Panc1 (cell line): ENCODE measurements at regions of chr22 and their contacts with region 1.

Region 1: DNA sequence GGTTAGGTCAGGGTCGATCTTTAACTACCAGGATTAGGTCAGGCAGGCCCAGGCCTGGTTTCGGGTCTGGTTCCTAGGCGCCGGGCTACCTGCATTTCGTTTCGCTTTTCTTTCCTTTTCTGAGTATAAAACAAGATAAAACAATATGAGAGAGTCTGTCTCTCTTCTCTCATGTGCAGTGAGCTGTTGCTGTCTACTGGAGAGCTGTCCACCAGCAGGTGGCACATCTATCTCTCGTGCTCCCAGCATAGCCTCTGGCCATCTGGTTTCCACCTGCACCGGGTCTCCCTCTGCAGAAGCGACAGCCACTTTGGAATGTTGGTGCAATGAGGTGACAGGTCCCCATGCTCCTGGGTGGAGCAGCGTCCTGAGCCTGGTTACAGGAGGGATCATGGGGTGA is 27.6 kb downstream of the RIBC2 start:
- DNase-seq: peak; percentile 17
- ATAC-seq: peak; percentile 98
- H3K4me3 ChIP-seq: no peak overlapping the region
- H3K27ac ChIP-seq: no peak overlapping the region
- H3K4me1 ChIP-seq: no peaks in the 10 kb centered on the region; the same call in 1 of the 2 replicates
- H3K27me3 ChIP-seq: no peaks in the 10 kb centered on the region
- CTCF ChIP-seq: peak; percentile 80

Region 2: DNA sequence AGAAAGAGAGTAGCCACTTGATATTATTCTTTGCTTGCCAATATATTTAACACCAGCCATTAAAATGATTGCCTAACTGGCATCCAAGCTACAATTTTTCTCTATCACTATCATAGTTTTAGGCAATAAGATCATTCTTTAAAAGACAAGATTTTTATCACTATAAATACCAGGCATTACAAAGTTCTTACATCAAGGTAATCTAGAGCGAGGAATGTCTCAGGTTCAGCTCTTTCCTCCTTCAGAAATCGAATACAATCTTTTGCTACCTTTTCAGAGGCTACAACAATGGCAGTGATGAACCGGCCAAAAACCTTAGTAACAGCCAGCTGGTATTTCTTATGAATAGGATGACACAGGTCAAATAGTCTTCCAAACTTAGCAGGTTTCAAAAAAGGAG is 51.6 kb before region 1 on chr22:
- CTCF ChIA-PET with region 1: interaction called, 11 read pairs
- POLR2A ChIA-PET with region 1: no interaction called
- in situ Hi-C with region 1: no loop called
- intact Hi-C with region 1: no loop called
- DNase-seq: no peak
- ATAC-seq: no peak
- H3K4me3 ChIP-seq: no peak overlapping the region
- H3K27ac ChIP-seq: no peak overlapping the region
- H3K4me1 ChIP-seq: no peaks in the 10 kb centered on the region
- H3K27me3 ChIP-seq: peaks cover 4% of the 10 kb centered on the region; the same call in 1 of the 2 replicates
- CTCF ChIP-seq: no peak

Region 3: DNA sequence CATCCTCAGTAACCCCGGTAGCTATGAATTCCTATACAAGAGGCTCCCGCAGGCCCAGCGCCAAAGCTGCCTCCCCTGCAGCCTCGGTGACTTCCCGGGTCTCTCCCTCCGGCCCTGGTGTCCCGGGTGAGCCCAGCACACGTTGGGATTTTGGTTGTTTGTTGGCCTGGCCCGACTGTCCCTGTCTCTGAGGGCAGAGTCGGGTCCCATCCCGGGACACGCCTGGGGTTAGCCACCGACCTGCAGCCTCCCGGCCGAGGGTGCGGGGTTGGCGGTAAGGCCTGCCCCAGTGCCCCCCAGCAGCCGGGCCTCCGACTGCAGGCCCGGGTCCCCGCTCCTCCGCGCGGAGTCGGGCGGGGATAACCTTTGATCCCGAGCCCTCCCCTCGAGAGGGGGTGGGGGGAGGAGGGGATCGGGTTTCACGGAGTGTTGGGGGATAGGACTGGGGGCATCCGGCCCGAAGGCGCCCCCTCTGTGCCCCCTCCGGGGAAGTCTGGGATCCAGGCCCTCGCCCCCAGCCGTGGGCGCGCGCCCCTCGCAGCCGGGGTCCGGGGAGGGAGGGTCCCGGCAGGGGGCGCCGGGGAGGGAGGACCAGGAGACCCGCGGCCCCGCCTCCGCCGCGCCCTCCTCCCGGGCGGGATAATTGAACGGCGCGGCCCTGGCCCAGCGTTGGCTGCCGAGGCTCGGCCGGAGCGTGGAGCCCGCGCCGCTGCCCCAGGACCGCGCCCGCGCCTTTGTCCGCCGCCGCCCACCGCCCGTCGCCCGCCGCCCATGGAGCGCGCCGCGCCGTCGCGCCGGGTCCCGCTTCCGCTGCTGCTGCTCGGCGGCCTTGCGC is 61.3 kb after region 1 on chr22 and contains the start of gene FBLN1:
- CTCF ChIA-PET with region 1: interaction called, 10 read pairs
- POLR2A ChIA-PET with region 1: no interaction called
- in situ Hi-C with region 1: no loop called
- intact Hi-C with region 1: no loop called
- DNase-seq: no peak
- ATAC-seq: peak; percentile 85
- H3K4me3 ChIP-seq: peak within 1 kb of the TSS; percentile 57 to 58
- H3K27ac ChIP-seq: peak within 1 kb of the TSS; percentile 84
- H3K4me1 ChIP-seq: peaks cover 5% of the 10 kb centered on the region
- H3K27me3 ChIP-seq: no peaks in the 10 kb centered on the region
- CTCF ChIP-seq: no peak; the same call in 1 of the 2 replicates
- total RNA-seq, gene FBLN1: 143 TPM

Region 4: GRCh38 chr22:45553351-45554039 is 112.4 kb after region 1 on chr22:
- CTCF ChIA-PET with region 1: interaction called, 3 read pairs
- POLR2A ChIA-PET with region 1: no interaction called
- in situ Hi-C with region 1: no loop called
- intact Hi-C with region 1: loop called (anchors 5 kb)
- DNase-seq: peak; percentile 61
- ATAC-seq: peak; percentile 89
- H3K4me3 ChIP-seq: no peak overlapping the region
- H3K27ac ChIP-seq: peak overlapping the region; percentile 54; the same call in 1 of the 2 replicates
- H3K4me1 ChIP-seq: peaks cover 8% of the 10 kb centered on the region
- H3K27me3 ChIP-seq: no peaks in the 10 kb centered on the region
- CTCF ChIP-seq: peak; percentile 92

Region 5: DNA sequence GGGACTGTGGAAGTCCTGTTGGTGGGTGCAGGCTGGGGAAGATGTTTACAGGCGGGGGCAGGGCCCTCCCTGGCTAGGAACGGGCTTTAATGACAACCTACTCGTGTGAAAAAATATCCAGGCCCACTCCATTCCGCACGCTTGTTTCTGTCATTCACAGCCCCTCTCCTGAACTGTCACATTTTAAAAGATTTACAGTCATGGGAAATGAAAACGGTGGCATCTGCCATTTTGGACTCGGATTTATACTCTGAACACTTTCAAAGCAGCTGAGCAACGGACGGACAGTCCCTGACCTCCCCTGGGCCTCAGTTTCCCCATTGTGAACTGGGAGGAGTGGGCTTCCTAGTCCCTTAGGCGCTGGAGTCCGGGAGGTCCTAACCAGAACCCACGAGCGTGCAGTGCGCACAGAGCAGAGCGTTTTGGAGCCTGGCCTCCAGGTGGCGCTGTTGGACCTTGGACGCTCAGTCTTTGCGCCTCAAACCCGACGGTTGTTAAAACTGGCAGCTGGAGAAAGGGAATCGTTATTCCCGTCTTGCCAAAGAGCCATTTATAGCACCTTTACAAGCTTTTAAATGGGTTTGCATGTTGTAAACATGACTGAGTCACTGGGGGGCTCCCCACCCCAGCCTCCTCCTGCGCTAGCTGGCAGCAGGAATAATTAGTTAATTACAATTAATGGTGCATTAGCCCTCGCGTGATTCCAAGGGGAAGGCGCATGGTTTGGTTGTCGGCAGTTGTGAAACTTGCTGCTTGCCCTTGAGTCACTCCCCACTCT is 136.8 kb after region 1 on chr22:
- CTCF ChIA-PET with region 1: no interaction called
- POLR2A ChIA-PET with region 1: no interaction called
- in situ Hi-C with region 1: no loop called
- intact Hi-C with region 1: no loop called
- DNase-seq: peak; percentile 42
- ATAC-seq: peak; percentile 89
- H3K4me3 ChIP-seq: no peak overlapping the region
- H3K27ac ChIP-seq: no peak overlapping the region
- H3K4me1 ChIP-seq: peaks cover 4% of the 10 kb centered on the region
- H3K27me3 ChIP-seq: no peaks in the 10 kb centered on the region
- CTCF ChIP-seq: peak; percentile 88